ENCODE measurements at regions of chr10 and their contacts with region 1.

Region 1: DNA sequence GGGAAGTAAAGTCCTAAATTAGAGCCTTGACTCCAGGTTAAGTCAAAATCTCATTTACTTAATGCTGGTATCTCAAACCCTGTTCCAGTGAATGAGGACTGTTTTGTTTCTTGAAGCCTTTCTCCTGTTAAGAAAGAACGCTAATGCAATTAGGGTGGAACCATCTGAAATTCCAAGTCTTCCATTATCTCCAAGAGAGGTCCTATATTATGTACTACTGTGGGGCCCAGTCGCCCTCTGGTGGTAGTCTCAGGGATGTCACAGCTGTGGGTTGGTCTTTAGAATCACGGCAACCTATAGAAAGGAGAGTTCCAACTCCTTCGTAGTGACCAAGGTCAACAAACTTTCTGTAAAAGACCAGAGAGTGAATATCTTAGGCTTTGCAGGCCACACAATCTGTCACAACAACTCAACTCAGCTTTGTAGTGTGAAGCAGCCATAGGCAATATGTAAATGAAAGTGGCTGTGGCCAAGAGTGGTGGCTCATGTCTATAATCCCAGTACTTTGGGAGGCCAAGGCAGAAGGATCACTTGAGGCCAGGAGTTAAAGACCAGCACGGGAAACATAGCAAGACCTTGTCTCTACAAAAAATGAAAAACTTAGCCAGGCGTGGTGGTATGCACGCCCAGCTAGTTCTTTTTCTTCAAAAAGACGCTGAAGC is 9.3 kb downstream of the RPP38 start:
- DNase-seq: peak; percentile 55 to 68 (median 62)
- H3K4me3 ChIP-seq: no peak overlapping the region
- H3K4me3 Mint-ChIP-seq: peak overlapping the region in 3 of 8 donors; percentile 11 to 48 (median 45)
- H3K27ac ChIP-seq: no peak overlapping the region
- H3K27ac Mint-ChIP-seq: peak overlapping the region; percentile 72 to 85 (median 76)
- H3K4me1 ChIP-seq: peaks cover 4% of the 10 kb centered on the region
- H3K4me1 Mint-ChIP-seq: peaks cover 4 to 9% (median 7%) of the 10 kb centered on the region in 4 donors
- H3K27me3 ChIP-seq: no peaks in the 10 kb centered on the region
- H3K27me3 Mint-ChIP-seq: no peaks in the 10 kb centered on the region

Region 2: GRCh38 chr10:14995964-14996565 is 110.4 kb before region 1 on chr10:
- CTCF ChIA-PET with region 1: no interaction called
- POLR2A ChIA-PET with region 1: no interaction called
- intact Hi-C with region 1: loop called (anchors 1 kb)
- DNase-seq: no peak
- H3K4me3 ChIP-seq: no peak overlapping the region
- H3K4me3 Mint-ChIP-seq: peak overlapping the region in 1 of 8 donors; percentile 0
- H3K27ac ChIP-seq: no peak overlapping the region
- H3K27ac Mint-ChIP-seq: no peak overlapping the region
- H3K4me1 ChIP-seq: no peaks in the 10 kb centered on the region
- H3K4me1 Mint-ChIP-seq: peaks cover 0 to 5% (median under 1%) of the 10 kb centered on the region in 4 donors
- H3K27me3 ChIP-seq: no peaks in the 10 kb centered on the region
- H3K27me3 Mint-ChIP-seq: peaks cover 0 to 2% of the 10 kb centered on the region in 2 donors

Region 3: DNA sequence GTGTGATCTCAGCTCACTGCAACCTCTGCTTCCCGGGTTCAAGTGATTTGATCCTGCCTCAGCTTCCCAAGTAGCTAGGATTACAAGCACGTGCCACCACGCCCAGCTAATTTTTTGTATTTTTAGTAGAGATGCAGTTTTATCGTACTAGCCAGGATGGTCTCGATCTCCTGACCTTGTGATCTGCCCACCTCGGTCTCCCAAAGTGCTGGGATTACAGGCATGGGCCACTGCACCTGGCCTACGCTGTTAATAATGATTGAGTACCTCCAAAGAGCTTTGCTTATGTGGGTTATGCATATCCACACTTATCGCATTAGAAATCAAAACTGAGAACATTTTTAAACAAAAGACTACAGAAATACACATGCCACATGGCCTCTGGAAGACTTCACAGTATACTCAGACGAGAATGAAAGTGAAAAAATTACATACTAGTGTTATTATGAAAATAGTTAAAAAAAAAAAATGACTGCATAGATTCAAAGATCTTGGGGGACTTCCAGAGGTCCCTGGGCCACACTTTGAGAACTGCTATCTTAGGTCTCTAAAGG is 16.1 kb after region 1 on chr10:
- CTCF ChIA-PET with region 1: interaction called, 34 read pairs
- POLR2A ChIA-PET with region 1: no interaction called
- intact Hi-C with region 1: no loop called
- DNase-seq: no peak
- H3K4me3 ChIP-seq: no peak overlapping the region
- H3K4me3 Mint-ChIP-seq: peak overlapping the region in 1 of 8 donors; percentile 46
- H3K27ac ChIP-seq: no peak overlapping the region
- H3K27ac Mint-ChIP-seq: peak overlapping the region; percentile 45 to 83 (median 61)
- H3K4me1 ChIP-seq: no peaks in the 10 kb centered on the region
- H3K4me1 Mint-ChIP-seq: peaks cover 4 to 29% (median 12%) of the 10 kb centered on the region in 4 donors
- H3K27me3 ChIP-seq: no peaks in the 10 kb centered on the region
- H3K27me3 Mint-ChIP-seq: no peaks in the 10 kb centered on the region

Region 4: DNA sequence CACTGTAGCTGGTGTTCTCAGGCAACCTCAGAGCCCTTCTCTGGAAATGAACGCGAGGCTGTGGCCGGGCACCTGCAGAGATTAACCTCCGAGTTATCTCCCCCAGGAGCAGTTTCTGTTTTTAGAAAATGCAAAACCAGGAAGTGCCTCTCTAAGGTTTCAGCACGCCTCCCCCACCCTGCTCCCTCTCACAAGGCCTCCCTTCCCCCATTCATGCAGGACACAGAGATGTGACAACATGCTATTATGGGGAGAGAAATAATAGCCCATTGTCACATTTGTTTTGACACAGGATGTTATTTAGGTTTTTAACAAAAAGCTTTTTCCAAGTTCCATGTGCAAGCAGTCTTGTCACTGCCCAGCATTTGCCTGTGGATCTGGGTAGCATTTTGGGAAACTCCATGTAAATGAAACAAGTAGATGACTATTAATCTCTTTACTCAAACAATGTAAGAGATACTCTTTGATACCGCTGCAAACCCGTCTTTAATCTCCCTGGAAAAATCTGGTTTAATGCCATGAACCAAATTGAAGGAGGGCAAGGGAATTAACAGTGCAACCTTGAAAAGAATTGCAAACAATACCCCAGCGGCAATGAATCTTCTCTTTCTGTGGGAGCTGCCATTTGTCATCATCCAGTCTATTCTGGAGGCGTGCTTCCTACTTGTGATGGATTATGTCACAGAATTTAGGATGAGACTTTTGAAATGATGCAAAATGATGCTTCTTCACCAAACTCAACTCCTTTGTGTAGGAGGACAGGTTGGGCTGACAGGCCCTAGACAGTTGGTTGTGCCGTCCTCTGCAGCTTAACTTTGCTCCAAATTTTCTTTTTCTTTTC is 148.5 kb after region 1 on chr10:
- CTCF ChIA-PET with region 1: no interaction called
- POLR2A ChIA-PET with region 1: no interaction called
- intact Hi-C with region 1: loop called (anchors 5 kb)
- DNase-seq: peak in 4 of 5 donors; percentile 6 to 18 (median 12)
- H3K4me3 ChIP-seq: peak overlapping the region; percentile 58 to 94
- H3K4me3 Mint-ChIP-seq: peak overlapping the region; percentile 90 to 99 (median 97)
- H3K27ac ChIP-seq: peak overlapping the region; percentile 43
- H3K27ac Mint-ChIP-seq: peak overlapping the region; percentile 65 to 95 (median 92)
- H3K4me1 ChIP-seq: peaks cover 28% of the 10 kb centered on the region
- H3K4me1 Mint-ChIP-seq: peaks cover 14 to 43% (median 30%) of the 10 kb centered on the region in 4 donors
- H3K27me3 ChIP-seq: no peaks in the 10 kb centered on the region
- H3K27me3 Mint-ChIP-seq: no peaks in the 10 kb centered on the region

Region 5: DNA sequence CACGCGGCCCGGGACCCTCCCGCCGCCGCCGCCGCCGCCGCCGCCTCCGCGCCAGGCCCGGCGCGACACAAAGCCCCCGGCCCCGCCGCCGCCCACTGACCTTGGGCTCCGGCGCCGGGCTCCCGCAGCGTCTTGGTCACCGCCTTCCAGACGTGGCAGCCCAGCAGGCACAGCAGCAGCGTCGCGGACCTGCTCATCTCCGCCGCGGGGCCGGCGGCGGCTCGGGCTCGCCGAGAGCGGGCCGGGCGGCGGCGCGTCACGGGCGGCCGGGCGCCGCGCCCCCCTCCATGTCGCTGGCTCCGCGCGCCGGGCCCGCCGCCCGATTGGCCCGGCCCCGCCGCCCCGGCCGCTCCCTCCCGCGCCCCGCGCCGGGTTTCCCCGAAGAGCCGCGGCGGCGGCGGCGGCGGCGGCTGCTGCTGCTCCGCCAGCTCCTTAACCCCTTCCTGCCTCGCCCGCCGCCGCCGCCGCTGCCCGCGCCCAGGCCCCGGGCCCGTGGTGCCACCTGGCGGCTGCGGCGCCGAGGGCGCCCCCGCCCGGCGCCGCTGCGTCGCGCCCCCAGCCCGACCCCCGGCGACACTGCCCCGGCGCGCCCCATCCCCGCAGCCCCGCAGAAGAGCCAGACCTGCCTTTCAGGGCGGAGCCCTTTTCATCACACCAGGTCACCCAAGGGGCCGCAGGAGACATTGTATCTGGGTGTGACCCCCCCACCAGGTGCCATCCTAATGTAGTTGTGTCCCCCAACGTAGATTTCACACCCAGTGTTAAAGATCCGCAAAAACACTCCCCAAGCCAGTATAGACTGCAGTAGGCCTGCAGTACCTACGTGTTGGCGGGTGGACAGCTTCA is 264.6 kb after region 1 on chr10 and contains the start of gene FAM171A1:
- CTCF ChIA-PET with region 1: no interaction called
- POLR2A ChIA-PET with region 1: no interaction called
- intact Hi-C with region 1: loop called (anchors 5 kb)
- DNase-seq: peak; percentile 60 to 69 (median 68)
- H3K4me3 ChIP-seq: peak within 1 kb of the TSS in 1 of 2 donors; percentile 29
- H3K4me3 Mint-ChIP-seq: peak within 1 kb of the TSS; percentile 74 to 86 (median 80)
- H3K27ac ChIP-seq: no peak within 1 kb of the TSS
- H3K27ac Mint-ChIP-seq: peak within 1 kb of the TSS; percentile 35 to 88 (median 68)
- H3K4me1 ChIP-seq: peaks cover 10% of the 10 kb centered on the region
- H3K4me1 Mint-ChIP-seq: peaks cover 1 to 25% (median 11%) of the 10 kb centered on the region in 4 donors
- H3K27me3 ChIP-seq: no peaks in the 10 kb centered on the region
- H3K27me3 Mint-ChIP-seq: peaks cover 7 to 9% of the 10 kb centered on the region in 2 donors
- total RNA-seq, gene FAM171A1: 7.1 to 8.0 TPM